ENCODE measurements at regions of chr14 and their contacts with region 1.

Region 1: GRCh38 chr14:54579621-54580020 is 12.7 kb downstream of the SAMD4A start:
- DNase-seq: no peak
- H3K4me3 ChIP-seq: no peak overlapping the region
- H3K27ac ChIP-seq: peak overlapping the region in 1 of 2 donors; percentile 37
- H3K4me1 ChIP-seq: peaks cover 0 to 77% (median 26%) of the 10 kb centered on the region in 4 donors
- H3K27me3 ChIP-seq: no peaks in the 10 kb centered on the region
- CTCF ChIP-seq: no peak

Region 2: GRCh38 chr14:54329082-54329695 is 250.4 kb before region 1 on chr14:
- intact Hi-C with region 1: no loop called
- DNase-seq: peak in 1 of 2 donors; percentile 57
- H3K4me3 ChIP-seq: no peak overlapping the region
- H3K27ac ChIP-seq: no peak overlapping the region
- H3K4me1 ChIP-seq: peaks cover 0 to 4% (median 0%) of the 10 kb centered on the region in 4 donors
- H3K27me3 ChIP-seq: no peaks in the 10 kb centered on the region
- CTCF ChIP-seq: peak; percentile 52 to 55

Region 3: DNA sequence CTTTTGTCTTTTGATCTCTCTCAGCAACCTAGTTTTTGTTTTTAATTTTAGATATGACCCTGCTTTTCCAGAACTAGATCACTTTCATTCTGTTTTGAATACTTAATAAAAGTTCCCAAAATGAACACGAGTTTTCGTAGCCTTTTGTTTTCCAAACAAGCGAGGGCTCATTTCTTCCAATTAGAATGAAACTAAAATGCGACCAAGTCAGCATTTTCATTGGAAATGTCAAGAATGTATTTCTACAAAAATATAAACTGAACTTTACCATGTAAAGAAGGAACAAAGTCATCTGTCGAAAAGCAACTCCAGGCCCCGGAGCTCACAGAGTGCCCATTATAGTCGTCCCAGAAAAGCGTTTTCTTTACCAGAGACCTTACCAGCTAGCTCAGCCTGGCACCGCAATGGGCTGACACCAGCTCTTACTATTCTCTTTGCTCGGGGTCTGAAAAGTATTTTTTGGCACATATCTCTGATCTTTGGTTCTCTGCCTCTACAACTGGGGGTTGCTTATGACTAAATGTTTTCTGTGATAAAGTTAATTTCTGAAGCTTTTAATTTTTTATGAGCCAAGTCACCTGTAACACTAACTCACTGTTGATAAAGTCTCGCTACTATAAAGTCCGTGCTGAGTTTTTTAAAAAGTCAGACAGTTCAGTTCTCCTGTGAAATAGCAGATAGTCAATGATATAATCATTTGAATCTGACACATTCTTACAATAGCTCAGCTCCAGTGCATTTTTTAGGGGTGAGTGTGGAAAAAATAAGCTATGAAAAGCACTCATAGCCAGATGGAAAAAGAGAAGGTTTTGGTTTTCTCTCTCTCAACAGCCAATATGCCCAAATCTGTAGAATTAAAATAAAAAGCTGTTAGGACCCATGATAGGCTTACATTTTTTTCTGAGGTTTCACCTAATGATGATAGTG is 30.7 kb after region 1 on chr14:
- intact Hi-C with region 1: loop called (anchors 5 kb)
- DNase-seq: no peak
- H3K4me3 ChIP-seq: peak overlapping the region in 1 of 2 donors; percentile 30
- H3K27ac ChIP-seq: peak overlapping the region; percentile 57 to 58
- H3K4me1 ChIP-seq: peaks cover 0 to 64% (median 24%) of the 10 kb centered on the region in 4 donors
- H3K27me3 ChIP-seq: no peaks in the 10 kb centered on the region
- CTCF ChIP-seq: no peak